ENCODE measurements at regions of chr2 and their contacts with region 1.

Region 1: DNA sequence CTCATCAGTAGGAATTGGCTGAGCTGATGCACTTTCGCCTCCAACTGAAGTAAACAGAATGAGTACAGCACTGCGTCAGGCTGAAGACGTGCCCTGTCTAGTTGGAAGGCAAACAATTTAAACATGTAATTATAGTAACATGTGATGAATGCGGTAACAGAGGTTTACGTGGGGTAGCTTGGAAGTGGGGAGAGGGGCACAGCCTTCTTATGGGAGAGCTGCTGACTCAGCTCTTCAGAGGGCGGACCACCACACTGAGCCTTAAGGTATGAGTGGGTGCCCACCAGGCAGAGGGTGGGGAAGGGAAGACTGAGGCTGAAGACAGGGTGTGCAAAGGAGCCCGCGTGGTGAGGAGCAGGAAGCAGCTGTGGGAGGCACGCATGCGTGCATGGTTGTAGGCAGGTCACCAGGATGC is 6.2 kb upstream of the EHD3 start:
- DNase-seq: no peak
- ATAC-seq: no peak
- H3K4me3 ChIP-seq: no peak overlapping the region
- H3K27ac ChIP-seq: no peak overlapping the region
- H3K4me1 ChIP-seq: no peaks in the 10 kb centered on the region
- H3K27me3 ChIP-seq: no peaks in the 10 kb centered on the region

Region 2: DNA sequence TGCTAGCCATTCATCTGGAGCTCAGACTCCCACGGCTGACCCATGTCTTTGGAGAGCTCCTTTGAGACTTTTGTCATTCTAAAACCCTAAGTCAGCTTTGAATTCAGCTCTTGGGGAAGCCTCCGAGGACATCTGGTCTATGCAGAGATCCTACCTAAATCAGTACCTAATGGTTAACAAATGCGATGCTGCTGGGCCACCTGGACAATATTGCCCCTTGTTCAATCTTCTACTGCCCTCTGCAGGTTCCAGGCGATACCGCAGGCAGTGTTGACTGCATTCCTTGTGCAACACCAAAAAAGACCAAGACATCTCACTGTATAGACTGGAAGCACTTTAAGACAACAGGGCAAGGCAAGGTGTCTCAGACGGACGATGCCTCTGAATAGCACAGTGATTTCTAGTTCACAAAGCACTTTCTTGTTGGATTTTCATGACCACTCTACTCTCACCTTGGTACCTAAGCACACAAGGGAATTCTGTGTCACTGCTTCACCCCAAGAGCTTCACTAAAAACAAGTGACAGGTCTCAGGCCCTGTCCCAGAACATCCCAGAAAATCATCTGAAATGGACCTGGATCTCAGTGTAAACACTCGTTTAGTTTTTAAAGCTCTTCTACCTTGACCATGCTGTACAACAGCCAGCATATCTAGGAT is 105.9 kb after region 1 on chr2:
- intact Hi-C with region 1: loop called in 2 of 4 experiments (anchors 5 kb)
- DNase-seq: peak; percentile 68 to 89 (median 82)
- ATAC-seq: peak; percentile 65 to 80
- H3K4me3 ChIP-seq: no peak overlapping the region
- H3K27ac ChIP-seq: no peak overlapping the region
- H3K4me1 ChIP-seq: no peaks in the 10 kb centered on the region
- H3K27me3 ChIP-seq: no peaks in the 10 kb centered on the region

Region 3: DNA sequence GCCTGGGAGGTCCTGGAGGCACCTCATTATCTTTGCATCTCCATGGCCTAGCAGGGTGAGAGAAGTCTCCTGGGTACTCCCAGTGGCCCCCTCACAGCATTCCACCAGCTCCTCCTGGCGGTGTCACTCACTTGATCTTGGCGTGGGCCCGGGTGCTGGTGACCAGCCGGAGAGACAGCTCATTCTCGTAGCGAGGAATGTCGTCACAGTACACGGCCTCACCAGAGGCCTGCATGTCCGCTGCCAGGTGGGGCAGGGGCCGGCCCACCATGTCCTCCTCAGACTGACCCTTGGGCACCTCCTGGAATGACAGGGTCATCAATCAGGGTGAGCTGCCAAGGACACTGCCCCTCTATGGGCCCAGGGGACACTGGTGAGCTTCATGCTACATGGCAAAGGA is 144.4 kb after region 1 on chr2:
- intact Hi-C with region 1: no loop called
- DNase-seq: no peak
- ATAC-seq: no peak
- H3K4me3 ChIP-seq: no peak overlapping the region
- H3K27ac ChIP-seq: no peak overlapping the region
- H3K4me1 ChIP-seq: no peaks in the 10 kb centered on the region
- H3K27me3 ChIP-seq: no peaks in the 10 kb centered on the region

Measured in right cardiac atrium (tissue), 5 donors.